PC-3 (cell line): ENCODE measurements at regions of chr1 and their contacts with region 1.

Region 1: DNA sequence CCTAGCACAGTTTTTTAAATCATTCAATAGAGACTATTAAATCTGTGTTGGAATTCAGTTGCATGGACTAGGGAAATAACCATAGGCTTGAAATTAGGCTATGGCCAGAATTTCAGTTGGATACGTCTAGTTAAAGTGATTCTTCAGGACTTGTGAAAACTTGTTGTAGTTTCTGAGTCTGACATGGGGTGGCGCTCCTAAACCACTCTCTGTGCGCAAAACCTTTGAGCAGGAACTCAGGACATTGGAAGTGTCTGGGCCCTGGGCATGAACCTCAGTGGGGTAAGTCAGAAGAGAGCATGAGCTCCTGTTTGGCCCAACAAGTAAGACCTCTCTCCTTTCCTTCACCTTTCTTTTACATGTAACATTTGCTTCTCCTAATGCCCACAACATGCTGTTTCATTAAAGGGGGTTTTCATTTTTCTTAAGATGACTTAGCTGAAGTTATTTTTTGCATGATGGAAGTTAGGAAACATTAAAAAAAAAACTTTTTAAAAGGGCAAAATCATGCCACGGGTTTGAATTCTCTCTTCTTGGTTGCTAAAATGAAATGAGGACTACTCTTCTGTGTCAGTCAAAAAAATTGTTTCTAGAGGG is 17.1 kb upstream of the CCDC190 start:
- DNase-seq: peak; percentile 93
- ATAC-seq: peak; percentile 23
- H3K4me3 ChIP-seq: no peak overlapping the region
- H3K27ac ChIP-seq: no peak overlapping the region
- H3K4me1 ChIP-seq: peaks cover 23% of the 10 kb centered on the region
- H3K27me3 ChIP-seq: no peaks in the 10 kb centered on the region
- CTCF ChIP-seq: peak; percentile 98

Region 2: GRCh38 chr1:162854245-162854882 is 23.7 kb before region 1 on chr1:
- CTCF ChIA-PET with region 1: interaction called, 18 read pairs
- POLR2A ChIA-PET with region 1: no interaction called
- intact Hi-C with region 1: loop called (anchors 1 kb)
- DNase-seq: peak; percentile 93
- ATAC-seq: peak; percentile 52
- H3K4me3 ChIP-seq: no peak overlapping the region
- H3K27ac ChIP-seq: peak overlapping the region; percentile 81
- H3K4me1 ChIP-seq: peaks cover 49% of the 10 kb centered on the region
- H3K27me3 ChIP-seq: no peaks in the 10 kb centered on the region
- CTCF ChIP-seq: peak; percentile 97

Region 3: GRCh38 chr1:162905174-162906158 is 27.4 kb after region 1 on chr1:
- CTCF ChIA-PET with region 1: interaction called, 6 read pairs
- POLR2A ChIA-PET with region 1: no interaction called
- intact Hi-C with region 1: loop called (anchors 5 kb)
- DNase-seq: peak; percentile 92
- ATAC-seq: peak; percentile 82
- H3K4me3 ChIP-seq: peak overlapping the region; percentile 3; the same call in 1 of the 2 replicates
- H3K27ac ChIP-seq: peak overlapping the region; percentile 94
- H3K4me1 ChIP-seq: peaks cover 55% of the 10 kb centered on the region
- H3K27me3 ChIP-seq: no peaks in the 10 kb centered on the region
- CTCF ChIP-seq: no peak

Region 4: DNA sequence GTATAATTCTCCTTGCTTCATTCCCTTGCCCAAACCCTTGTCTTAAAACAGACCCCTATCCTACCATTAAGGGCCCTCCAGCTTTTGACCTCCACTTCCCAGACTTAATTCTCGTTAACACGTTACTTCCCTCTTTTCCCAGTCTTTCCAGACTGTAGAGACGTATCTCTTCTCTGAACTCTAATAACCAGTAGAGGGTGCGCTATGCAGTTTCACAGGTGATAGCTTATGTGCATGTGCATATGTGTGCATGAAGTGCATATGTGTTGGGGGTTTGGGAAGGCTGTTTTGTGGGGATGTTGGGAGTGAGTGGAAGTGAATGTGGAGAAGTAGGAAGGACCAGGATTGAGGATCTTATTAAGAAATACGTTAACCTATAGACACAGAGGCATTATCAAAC is 60.9 kb after region 1 on chr1:
- CTCF ChIA-PET with region 1: no interaction called
- POLR2A ChIA-PET with region 1: no interaction called
- intact Hi-C with region 1: loop called (anchors 1 kb)
- DNase-seq: peak; percentile 65
- ATAC-seq: peak; percentile 79
- H3K4me3 ChIP-seq: no peak overlapping the region
- H3K27ac ChIP-seq: no peak overlapping the region
- H3K4me1 ChIP-seq: no peaks in the 10 kb centered on the region
- H3K27me3 ChIP-seq: no peaks in the 10 kb centered on the region
- CTCF ChIP-seq: peak; percentile 81

Region 5: DNA sequence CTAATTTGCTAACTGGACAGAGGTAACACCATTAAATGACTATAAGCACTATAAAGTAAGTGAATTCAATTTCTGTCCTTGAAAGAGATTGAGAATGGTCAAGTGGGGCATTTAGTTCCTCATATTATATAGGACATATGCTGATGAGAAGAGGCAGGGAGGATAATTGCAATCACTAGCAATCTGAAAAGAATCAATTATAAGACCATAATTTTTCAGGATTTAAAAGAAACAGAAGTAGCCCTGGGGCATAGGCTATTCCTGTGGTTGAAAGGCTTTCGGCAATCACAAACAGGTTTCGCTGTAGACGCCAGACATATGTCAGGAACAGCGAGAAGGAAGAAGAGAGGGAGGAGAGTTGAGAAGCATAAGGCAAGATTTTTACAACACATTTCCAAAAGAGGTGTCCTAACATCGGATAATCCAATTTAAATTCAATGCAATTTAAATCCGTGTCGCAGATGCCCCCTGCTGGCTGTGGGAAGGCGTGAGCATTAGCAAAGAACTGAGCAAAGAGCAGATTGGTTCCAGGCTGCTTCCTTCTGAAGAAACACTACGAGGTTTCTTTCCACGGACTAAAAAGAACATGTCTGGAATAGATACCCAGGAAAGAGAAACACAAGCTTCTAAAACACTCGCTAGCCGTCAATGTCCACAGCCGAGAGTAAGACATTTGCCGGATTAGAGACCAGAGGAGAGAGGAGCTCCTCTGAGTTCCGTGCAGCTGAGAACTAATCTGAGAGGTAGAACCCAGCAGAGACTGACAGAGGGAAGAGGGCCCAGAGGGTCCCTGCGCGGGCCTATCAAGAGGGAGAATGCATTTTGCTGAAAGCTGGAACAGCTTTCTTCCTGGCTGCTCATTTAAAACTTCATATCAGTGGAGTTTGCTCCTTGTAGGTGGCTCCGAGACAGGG is 296.7 kb after region 1 on chr1:
- CTCF ChIA-PET with region 1: no interaction called
- POLR2A ChIA-PET with region 1: no interaction called
- intact Hi-C with region 1: loop called (anchors 1 kb)
- DNase-seq: peak; percentile 85
- ATAC-seq: peak; percentile 50
- H3K4me3 ChIP-seq: peak overlapping the region; percentile 55; the same call in 1 of the 2 replicates
- H3K27ac ChIP-seq: 0 out of 2 replicates have a peak overlapping the region, but pooled peaks have one; percentile 1
- H3K4me1 ChIP-seq: peaks cover 46% of the 10 kb centered on the region
- H3K27me3 ChIP-seq: no peaks in the 10 kb centered on the region
- CTCF ChIP-seq: peak; percentile 99